ENCODE measurements at regions of chr5 and their contacts with region 1.

Region 1: GRCh38 chr5:126354012-126354857 is 69.0 kb upstream of the GRAMD2B start:
- DNase-seq: no peak
- H3K4me3 ChIP-seq: peak overlapping the region in 35 of 59 donors; percentile 3 to 53 (median 29)
- H3K27ac ChIP-seq: peak overlapping the region in 42 of 59 donors; percentile 2 to 76 (median 41)
- H3K27me3 ChIP-seq: no peaks in the 10 kb centered on the region
- CTCF ChIP-seq: peak in 55 of 56 donors; percentile 52 to 94 (median 76)

Region 2: DNA sequence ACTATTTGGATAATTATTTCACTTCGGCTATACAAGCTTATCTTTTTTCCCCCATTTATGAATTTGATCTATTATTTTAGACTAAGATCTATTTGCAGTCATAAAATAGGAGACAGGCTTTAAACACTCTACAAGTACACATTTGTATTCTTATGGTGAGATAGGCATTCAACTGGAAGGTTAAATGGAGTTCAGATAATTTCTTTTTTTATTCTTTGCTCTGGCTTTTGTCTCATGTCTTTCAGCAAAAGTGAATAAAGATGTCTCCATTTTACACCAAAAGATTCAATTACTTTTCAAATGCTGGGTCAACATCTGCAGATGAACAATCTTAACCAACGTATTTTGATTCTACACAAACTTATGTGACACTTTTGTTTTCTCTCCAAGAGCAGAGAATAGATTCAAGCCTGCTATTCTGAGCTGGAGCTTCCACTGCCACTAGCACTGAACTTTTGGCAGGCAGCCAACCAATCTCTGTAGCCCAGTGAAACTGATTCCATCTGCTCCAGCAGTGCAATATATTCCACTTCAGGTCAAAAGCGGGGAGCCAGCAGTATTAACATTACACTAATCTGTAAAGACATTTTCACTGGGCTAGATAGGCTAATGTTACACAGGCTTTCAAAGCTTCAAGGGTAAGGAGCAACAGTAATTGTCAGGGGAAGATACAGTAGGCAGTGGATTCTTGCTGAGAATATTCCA is 1155.8 kb before region 1 on chr5:
- intact Hi-C with region 1: no loop called
- DNase-seq: peak; percentile 40 to 94 (median 76)
- H3K4me3 ChIP-seq: no peak overlapping the region
- H3K27ac ChIP-seq: peak overlapping the region in 4 of 59 donors; percentile 3 to 47 (median 7)
- H3K27me3 ChIP-seq: peaks cover 0 to 4% (median 0%) of the 10 kb centered on the region in 45 donors
- CTCF ChIP-seq: peak in 1 of 56 donors; percentile 10

Region 3: GRCh38 chr5:126309860-126310259 is 44.4 kb before region 1 on chr5:
- intact Hi-C with region 1: no loop called
- DNase-seq: no peak
- H3K4me3 ChIP-seq: no peak overlapping the region
- H3K27ac ChIP-seq: no peak overlapping the region
- H3K27me3 ChIP-seq: no peaks in the 10 kb centered on the region
- CTCF ChIP-seq: no peak

Region 4: DNA sequence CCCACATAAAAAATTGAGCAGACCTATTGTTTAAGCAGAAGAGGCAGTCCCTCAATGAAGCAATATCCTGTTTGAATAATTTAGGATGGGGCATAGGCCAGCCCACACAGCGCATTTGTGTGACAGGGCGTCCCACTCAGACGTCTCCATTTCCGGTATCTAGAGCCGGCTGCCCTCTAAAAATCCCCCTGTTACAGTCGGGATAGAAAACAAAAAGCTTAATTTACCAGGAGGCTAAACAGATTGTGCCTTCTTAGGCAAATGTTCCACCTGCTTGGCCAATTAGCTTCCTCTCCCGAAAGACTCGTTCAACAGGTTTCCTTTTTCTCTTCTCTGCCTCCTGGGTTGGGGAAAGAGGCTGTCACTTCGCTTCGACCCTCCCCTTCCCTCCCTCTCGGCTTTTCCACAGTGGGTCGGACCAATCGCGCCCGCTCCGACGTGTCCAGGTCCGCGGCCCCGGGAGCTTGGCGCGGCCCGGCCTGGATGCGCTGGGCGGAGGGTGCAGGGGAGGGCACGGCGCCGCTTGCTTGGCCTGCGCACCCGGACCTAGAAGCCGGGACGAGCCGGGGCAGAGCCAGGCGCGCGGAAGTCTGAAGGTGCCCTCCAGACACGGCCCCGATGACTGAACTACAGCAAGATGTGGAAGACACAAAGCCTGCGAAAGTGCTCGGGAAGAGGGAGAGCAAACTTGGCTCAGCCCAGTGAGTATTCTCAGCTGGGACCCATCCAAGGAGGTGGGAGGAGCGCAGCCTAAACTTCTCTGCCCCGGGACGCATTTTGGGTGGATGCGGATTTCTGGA is 69.0 kb after region 1 on chr5 and contains the start of gene GRAMD2B:
- intact Hi-C with region 1: loop called in 1 of 2 experiments (anchors 10 kb)
- DNase-seq: peak; percentile 30 to 82 (median 68)
- H3K4me3 ChIP-seq: peak within 1 kb of the TSS; percentile 53 to 90 (median 74)
- H3K27ac ChIP-seq: peak within 1 kb of the TSS; percentile 77 to 98 (median 94)
- H3K27me3 ChIP-seq: no peaks in the 10 kb centered on the region
- CTCF ChIP-seq: peak in 8 of 56 donors; percentile 4 to 27 (median 12)
- total RNA-seq, gene GRAMD2B: 39.5 to 205 (median 86.4) TPM

Region 5: DNA sequence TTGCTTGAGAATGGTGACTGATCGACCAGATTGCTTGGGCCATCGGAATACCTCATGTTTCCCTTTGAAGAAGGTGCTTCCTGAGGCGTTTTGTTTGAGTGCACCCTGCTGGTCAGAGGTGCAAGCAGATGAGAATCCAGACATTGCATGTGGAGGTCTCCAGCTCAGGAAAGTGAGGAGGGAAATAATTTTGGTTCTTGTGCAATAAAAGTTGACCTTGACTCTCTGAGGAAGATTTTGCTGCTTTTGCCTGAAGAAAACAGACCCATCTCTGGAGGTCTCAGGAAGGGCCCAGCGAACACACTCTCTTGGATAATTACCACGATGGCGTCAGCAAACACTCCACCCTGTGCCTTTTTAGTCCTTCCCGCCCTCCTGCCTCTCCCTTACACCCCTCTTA is 138.7 kb after region 1 on chr5:
- intact Hi-C with region 1: loop called in 1 of 2 experiments (anchors 2 kb)
- DNase-seq: no peak
- H3K4me3 ChIP-seq: no peak overlapping the region
- H3K27ac ChIP-seq: peak overlapping the region in 45 of 59 donors; percentile 4 to 91 (median 57)
- H3K27me3 ChIP-seq: no peaks in the 10 kb centered on the region
- CTCF ChIP-seq: peak in 35 of 56 donors; percentile 10 to 56 (median 26)

Region 6: GRCh38 chr5:126536874-126537273 is 182.6 kb after region 1 on chr5:
- intact Hi-C with region 1: loop called (anchors 2 kb)
- DNase-seq: no peak
- H3K4me3 ChIP-seq: no peak overlapping the region
- H3K27ac ChIP-seq: peak overlapping the region in 20 of 59 donors; percentile 0 to 68 (median 33)
- H3K27me3 ChIP-seq: no peaks in the 10 kb centered on the region
- CTCF ChIP-seq: peak in 14 of 56 donors; percentile 5 to 34 (median 17)

Region 7: GRCh38 chr5:126544087-126544740 is 190.0 kb after region 1 on chr5:
- intact Hi-C with region 1: loop called (anchors 2 kb)
- DNase-seq: peak in 4 of 10 donors; percentile 44 to 54 (median 48)
- H3K4me3 ChIP-seq: no peak overlapping the region
- H3K27ac ChIP-seq: no peak overlapping the region
- H3K27me3 ChIP-seq: no peaks in the 10 kb centered on the region
- CTCF ChIP-seq: peak in 52 of 56 donors; percentile 9 to 63 (median 47)

Region 8: DNA sequence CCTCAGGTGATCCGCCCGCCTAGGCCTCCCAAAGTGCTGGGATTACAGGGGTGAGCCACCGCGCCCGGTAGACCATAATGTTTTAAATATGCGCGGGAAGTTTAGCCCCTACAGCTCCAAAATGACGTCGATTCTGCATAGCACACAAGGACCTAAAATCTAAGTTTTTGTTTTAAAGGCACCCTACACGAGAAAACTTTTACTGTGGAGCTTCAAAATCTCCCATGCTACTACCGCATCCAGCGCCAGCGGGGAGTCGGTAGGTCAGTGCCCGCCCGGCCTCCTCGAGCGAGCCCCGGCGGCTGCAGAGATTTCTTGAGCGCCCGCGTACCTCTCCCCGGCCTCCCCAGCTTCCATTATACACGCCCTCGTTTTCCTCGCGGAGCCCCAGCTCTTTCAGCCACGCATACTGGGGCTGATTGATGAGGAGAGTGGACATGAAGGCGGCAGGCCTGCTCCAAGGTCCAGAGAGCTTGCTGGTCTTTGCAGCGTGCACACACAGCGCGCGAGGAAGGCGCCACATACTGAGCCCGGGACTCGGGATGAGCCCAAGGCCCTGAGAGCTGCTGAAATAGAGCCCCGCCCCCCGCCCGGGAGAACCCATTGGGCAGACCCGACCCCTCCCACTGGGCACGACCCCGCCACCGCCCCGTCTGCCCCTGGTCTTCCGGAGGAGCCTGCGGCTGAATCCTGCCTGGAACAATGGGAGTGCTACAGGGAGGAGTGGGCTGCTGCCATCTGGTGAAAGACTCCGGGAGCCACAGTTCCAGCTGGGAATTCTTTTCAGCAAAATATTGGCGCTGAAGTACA is 240.6 kb after region 1 on chr5 and contains the start of gene ALDH7A1:
- intact Hi-C with region 1: loop called in 1 of 2 experiments (anchors 5 kb)
- DNase-seq: peak; percentile 73 to 87 (median 84)
- H3K4me3 ChIP-seq: peak within 1 kb of the TSS; percentile 50 to 94 (median 76)
- H3K27ac ChIP-seq: peak within 1 kb of the TSS in 57 of 59 donors; percentile 16 to 93 (median 80)
- H3K27me3 ChIP-seq: no peaks in the 10 kb centered on the region
- CTCF ChIP-seq: peak; percentile 19 to 73 (median 56)
- total RNA-seq, gene ALDH7A1: 54.8 to 188 (median 92.2) TPM